ENCODE measurements at regions of chr12 and their contacts with region 1.

Region 1: GRCh38 chr12:52278541-52279421 is 4.3 kb downstream of the KRT86 start:
- DNase-seq: peak; percentile 45 to 69 (median 61)
- H3K4me3 ChIP-seq: peak overlapping the region in 1 of 7 experiments; percentile 47
- H3K27ac ChIP-seq: no peak overlapping the region
- H3K4me1 ChIP-seq: peaks cover 0 to 7% (median 0%) of the 10 kb centered on the region in 4 experiments
- H3K27me3 ChIP-seq: peaks cover 0 to 20% (median 10%) of the 10 kb centered on the region in 5 experiments

Region 2: DNA sequence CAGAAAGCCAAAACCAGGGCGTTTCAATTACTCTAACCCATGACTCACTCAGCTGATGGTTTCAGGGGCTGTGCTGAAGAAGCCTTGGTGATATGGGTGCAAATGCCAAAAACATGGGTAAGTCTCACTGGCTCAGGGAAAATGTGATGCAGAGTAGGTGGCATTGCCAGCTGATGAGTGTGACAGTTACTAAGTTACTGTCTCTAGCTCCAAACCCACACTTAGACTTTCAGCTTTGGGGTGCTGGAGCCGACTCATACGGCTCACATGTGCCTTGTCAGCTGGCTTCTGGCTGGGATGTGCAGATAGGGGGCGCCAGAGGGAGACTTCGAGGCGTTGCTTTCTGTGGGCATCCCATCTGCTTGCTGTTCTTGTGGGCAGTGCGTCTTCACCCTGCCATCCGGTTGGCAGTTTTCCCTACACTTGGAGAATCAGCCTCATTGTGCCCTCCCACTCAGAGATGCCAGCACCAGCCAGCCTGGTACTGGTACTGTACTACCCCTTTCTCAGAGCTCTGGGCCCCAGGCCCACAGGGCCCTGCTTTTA is 56.8 kb before region 1 on chr12:
- CTCF ChIA-PET with region 1: interaction called, 28 read pairs
- POLR2A ChIA-PET with region 1: interaction called, 3 read pairs
- DNase-seq: peak; percentile 46 to 80 (median 75)
- H3K4me3 ChIP-seq: no peak overlapping the region
- H3K27ac ChIP-seq: no peak overlapping the region
- H3K4me1 ChIP-seq: no peaks in the 10 kb centered on the region
- H3K27me3 ChIP-seq: peaks cover 2 to 14% (median 7%) of the 10 kb centered on the region in 5 experiments

Region 3: GRCh38 chr12:52235822-52236692 is 42.7 kb before region 1 on chr12:
- CTCF ChIA-PET with region 1: interaction called, 10 read pairs
- POLR2A ChIA-PET with region 1: no interaction called
- DNase-seq: no peak
- H3K4me3 ChIP-seq: no peak overlapping the region
- H3K27ac ChIP-seq: no peak overlapping the region
- H3K4me1 ChIP-seq: peaks cover 0 to 8% (median 1%) of the 10 kb centered on the region in 4 experiments
- H3K27me3 ChIP-seq: peaks cover 0 to 50% (median 20%) of the 10 kb centered on the region in 5 experiments

Region 4: GRCh38 chr12:52249051-52249461 is 29.7 kb before region 1 on chr12:
- CTCF ChIA-PET with region 1: interaction called, 49 read pairs
- POLR2A ChIA-PET with region 1: no interaction called
- DNase-seq: no peak
- H3K4me3 ChIP-seq: no peak overlapping the region
- H3K27ac ChIP-seq: no peak overlapping the region
- H3K4me1 ChIP-seq: peaks cover 0 to 35% (median 20%) of the 10 kb centered on the region in 4 experiments
- H3K27me3 ChIP-seq: peaks cover 0 to 34% (median 9%) of the 10 kb centered on the region in 5 experiments

Region 5: DNA sequence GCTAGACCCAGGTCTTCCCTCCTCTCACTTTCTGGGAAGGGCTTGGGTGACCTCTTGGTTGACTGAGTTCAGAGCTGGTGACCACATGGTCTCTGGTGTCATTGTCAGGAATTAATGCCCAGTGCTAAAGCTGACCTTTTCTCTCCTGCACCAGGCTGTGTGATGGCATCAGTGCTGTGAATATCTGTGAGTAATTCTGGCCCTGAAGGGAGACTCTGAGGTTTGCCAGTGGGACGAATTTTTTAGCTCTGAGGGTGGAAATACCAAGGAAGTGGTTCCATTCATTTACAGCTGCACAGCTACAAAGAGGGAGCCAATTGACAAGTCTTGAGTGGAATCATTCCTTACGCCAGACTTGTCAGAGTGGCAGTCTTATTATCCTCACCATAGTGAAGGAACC is 10.6 kb before region 1 on chr12:
- CTCF ChIA-PET with region 1: interaction called, 133 read pairs
- POLR2A ChIA-PET with region 1: no interaction called
- DNase-seq: no peak
- H3K4me3 ChIP-seq: no peak overlapping the region
- H3K27ac ChIP-seq: no peak overlapping the region
- H3K4me1 ChIP-seq: no peaks in the 10 kb centered on the region
- H3K27me3 ChIP-seq: peaks cover 2 to 14% (median 8%) of the 10 kb centered on the region in 5 experiments

Region 6: GRCh38 chr12:52307836-52308805 is 29.3 kb after region 1 on chr12:
- CTCF ChIA-PET with region 1: interaction called, 72 read pairs
- POLR2A ChIA-PET with region 1: no interaction called
- DNase-seq: peak; percentile 50 to 80 (median 71)
- H3K4me3 ChIP-seq: peak overlapping the region in 5 of 7 experiments; percentile 38 to 76 (median 61)
- H3K27ac ChIP-seq: no peak overlapping the region
- H3K4me1 ChIP-seq: peaks cover 0 to 24% (median 21%) of the 10 kb centered on the region in 4 experiments
- H3K27me3 ChIP-seq: peaks cover 3 to 57% (median 30%) of the 10 kb centered on the region in 5 experiments

Region 7: GRCh38 chr12:52884526-52885293 is 605.9 kb after region 1 on chr12:
- CTCF ChIA-PET with region 1: no interaction called
- POLR2A ChIA-PET with region 1: no interaction called
- DNase-seq: peak; percentile 63 to 75 (median 69)
- H3K4me3 ChIP-seq: no peak overlapping the region
- H3K27ac ChIP-seq: no peak overlapping the region
- H3K4me1 ChIP-seq: peaks cover 0 to 11% (median 0%) of the 10 kb centered on the region in 4 experiments
- H3K27me3 ChIP-seq: no peaks in the 10 kb centered on the region

Measured in common myeloid progenitor, CD34-positive (primary cell).